Calu3 (cell line): ENCODE measurements at regions of chr4 and their contacts with region 1.

Region 1: DNA sequence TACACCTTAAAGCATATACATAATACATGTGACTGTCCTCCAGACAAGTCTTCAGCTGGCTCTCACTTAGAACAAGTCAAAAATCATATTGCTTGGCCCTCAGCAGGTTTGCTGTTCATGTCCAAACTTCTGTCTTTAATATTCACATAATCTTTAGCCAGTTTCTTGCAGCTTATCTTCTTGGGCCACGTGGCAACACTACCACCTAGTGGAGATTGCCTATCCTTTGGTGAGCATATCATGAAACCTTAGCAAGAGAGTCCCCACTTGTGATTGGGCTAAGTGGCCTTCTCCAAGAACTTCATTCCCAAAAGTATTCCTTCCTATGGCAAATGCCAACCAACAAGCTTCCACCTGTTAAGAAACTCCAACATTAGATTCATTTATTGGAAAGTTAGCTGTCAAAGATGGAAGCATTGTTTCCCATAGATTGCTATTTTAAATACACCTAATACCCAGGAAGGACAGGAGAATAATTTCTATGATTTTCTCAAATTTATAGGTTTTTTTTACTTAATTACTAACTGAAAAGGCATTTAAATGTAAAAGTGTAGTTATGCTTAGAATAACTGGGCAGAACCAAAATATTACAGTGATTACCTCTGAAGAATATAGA is 231.9 kb upstream of the INTU start:
- DNase-seq: peak; percentile 73
- H3K4me3 Mint-ChIP-seq: no peak overlapping the region
- H3K27ac Mint-ChIP-seq: no peak overlapping the region
- H3K4me1 Mint-ChIP-seq: peaks cover 2% of the 10 kb centered on the region
- H3K27me3 Mint-ChIP-seq: no peaks in the 10 kb centered on the region
- CTCF ChIP-seq: peak; percentile 64

Region 2: GRCh38 chr4:125772680-125773079 is 1628.2 kb before region 1 on chr4:
- CTCF ChIA-PET with region 1: no interaction called
- intact Hi-C with region 1: loop called (anchors 5 kb)
- DNase-seq: no peak
- H3K4me3 Mint-ChIP-seq: no peak overlapping the region
- H3K27ac Mint-ChIP-seq: no peak overlapping the region
- H3K4me1 Mint-ChIP-seq: no peaks in the 10 kb centered on the region
- H3K27me3 Mint-ChIP-seq: no peaks in the 10 kb centered on the region
- CTCF ChIP-seq: no peak

Region 3: DNA sequence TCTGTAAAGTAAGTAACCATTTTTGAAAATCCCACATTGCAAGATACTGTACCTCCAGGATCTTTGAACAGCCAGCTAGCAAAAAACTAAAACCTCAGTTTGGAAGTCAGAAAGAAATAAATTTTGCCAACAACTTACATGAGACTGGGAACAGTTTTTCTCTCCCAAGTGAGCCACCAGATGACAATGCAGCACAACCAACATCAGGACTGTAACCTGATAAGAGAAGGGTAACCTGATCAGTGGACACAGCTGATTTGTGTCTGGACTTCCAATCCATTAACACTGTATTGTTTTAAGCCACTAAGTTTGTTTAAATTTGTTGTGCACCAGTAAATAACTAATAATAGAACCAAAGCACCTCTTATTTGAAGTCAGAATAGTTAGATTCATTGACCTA is 1162.8 kb before region 1 on chr4:
- CTCF ChIA-PET with region 1: no interaction called
- intact Hi-C with region 1: loop called (anchors 10 kb)
- DNase-seq: no peak
- H3K4me3 Mint-ChIP-seq: no peak overlapping the region
- H3K27ac Mint-ChIP-seq: no peak overlapping the region
- H3K4me1 Mint-ChIP-seq: no peaks in the 10 kb centered on the region
- H3K27me3 Mint-ChIP-seq: no peaks in the 10 kb centered on the region
- CTCF ChIP-seq: no peak

Region 4: GRCh38 chr4:126627255-126627654 is 773.6 kb before region 1 on chr4:
- CTCF ChIA-PET with region 1: no interaction called
- intact Hi-C with region 1: loop called (anchors 10 kb)
- DNase-seq: no peak
- H3K4me3 Mint-ChIP-seq: no peak overlapping the region
- H3K27ac Mint-ChIP-seq: no peak overlapping the region
- H3K4me1 Mint-ChIP-seq: no peaks in the 10 kb centered on the region
- H3K27me3 Mint-ChIP-seq: no peaks in the 10 kb centered on the region
- CTCF ChIP-seq: no peak

Region 5: DNA sequence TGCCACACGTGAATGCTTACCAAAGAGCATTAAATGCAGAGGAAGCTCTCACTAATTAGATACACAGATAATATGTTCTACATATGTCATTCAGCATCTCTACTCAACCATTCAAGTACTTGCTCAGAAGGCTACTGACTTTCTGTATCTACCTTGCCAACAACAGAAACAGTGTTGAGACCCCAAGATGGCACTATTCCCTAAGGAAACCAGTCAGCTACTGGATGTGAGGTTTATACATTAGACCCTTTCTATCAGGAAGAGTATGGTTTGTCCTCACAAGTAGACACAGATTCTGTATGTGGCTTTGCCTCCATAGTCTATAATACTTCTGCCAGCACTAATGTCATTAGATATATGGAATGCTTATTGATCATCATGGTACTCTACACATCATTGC is 212.0 kb before region 1 on chr4:
- CTCF ChIA-PET with region 1: no interaction called
- intact Hi-C with region 1: loop called (anchors 1 kb)
- DNase-seq: no peak
- H3K4me3 Mint-ChIP-seq: no peak overlapping the region
- H3K27ac Mint-ChIP-seq: no peak overlapping the region
- H3K4me1 Mint-ChIP-seq: no peaks in the 10 kb centered on the region
- H3K27me3 Mint-ChIP-seq: no peaks in the 10 kb centered on the region
- CTCF ChIP-seq: no peak

Region 6: GRCh38 chr4:127335073-127335620 is 65.7 kb before region 1 on chr4:
- CTCF ChIA-PET with region 1: no interaction called
- intact Hi-C with region 1: no loop called
- DNase-seq: no peak
- H3K4me3 Mint-ChIP-seq: no peak overlapping the region
- H3K27ac Mint-ChIP-seq: no peak overlapping the region
- H3K4me1 Mint-ChIP-seq: no peaks in the 10 kb centered on the region
- H3K27me3 Mint-ChIP-seq: no peaks in the 10 kb centered on the region
- CTCF ChIP-seq: no peak

Region 7: DNA sequence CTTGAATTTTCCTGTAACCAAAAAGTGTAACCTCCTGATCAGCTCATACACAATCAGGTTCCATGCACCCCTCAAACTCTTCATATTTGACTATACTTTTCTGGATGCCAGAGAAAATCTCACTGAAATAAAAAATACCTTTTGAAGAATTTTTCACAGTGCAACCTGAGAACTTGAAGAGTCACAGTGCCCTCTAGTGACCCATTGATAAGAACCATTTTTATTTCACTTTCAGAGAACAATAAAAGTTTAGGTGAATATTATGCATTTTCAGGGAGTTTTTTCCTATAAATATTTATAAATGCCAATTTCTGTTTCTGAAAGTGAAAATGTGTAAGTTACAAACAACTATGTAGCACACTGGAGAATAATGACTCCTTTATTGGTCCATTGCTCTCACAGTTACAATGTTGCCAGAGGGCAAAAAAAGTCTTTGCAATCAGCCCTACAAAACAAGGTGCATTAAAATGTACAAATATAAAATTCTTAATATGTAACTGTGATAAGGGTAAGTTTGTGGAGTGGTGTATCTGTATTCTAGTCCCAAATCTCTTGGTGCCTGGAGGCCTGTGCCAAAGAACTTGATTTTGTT is 78.3 kb after region 1 on chr4:
- CTCF ChIA-PET with region 1: no interaction called
- intact Hi-C with region 1: loop called (anchors 5 kb)
- DNase-seq: no peak
- H3K4me3 Mint-ChIP-seq: no peak overlapping the region
- H3K27ac Mint-ChIP-seq: no peak overlapping the region
- H3K4me1 Mint-ChIP-seq: no peaks in the 10 kb centered on the region
- H3K27me3 Mint-ChIP-seq: no peaks in the 10 kb centered on the region
- CTCF ChIP-seq: no peak

Region 8: DNA sequence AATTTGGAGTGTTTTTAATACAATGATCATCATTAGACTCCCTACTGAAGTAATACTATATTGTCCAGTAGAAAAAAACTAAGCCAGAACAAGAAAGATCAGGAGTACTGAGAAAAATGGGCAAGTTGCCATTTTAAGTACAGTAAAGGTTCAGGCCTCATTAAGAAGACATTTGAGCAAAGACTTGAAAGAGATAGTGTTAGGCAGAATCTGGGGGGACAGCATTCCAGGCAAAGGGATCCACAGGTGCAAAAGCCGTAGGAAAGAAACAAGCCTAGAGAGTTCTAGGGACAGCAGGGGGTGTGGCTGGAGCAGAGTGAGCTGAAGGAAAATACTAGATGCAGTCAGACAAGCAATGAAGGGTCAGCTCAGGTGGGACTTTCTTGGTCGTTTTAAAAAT is 173.8 kb after region 1 on chr4:
- CTCF ChIA-PET with region 1: no interaction called
- intact Hi-C with region 1: no loop called
- DNase-seq: no peak
- H3K4me3 Mint-ChIP-seq: no peak overlapping the region
- H3K27ac Mint-ChIP-seq: no peak overlapping the region
- H3K4me1 Mint-ChIP-seq: no peaks in the 10 kb centered on the region
- H3K27me3 Mint-ChIP-seq: no peaks in the 10 kb centered on the region
- CTCF ChIP-seq: no peak

Region 9: DNA sequence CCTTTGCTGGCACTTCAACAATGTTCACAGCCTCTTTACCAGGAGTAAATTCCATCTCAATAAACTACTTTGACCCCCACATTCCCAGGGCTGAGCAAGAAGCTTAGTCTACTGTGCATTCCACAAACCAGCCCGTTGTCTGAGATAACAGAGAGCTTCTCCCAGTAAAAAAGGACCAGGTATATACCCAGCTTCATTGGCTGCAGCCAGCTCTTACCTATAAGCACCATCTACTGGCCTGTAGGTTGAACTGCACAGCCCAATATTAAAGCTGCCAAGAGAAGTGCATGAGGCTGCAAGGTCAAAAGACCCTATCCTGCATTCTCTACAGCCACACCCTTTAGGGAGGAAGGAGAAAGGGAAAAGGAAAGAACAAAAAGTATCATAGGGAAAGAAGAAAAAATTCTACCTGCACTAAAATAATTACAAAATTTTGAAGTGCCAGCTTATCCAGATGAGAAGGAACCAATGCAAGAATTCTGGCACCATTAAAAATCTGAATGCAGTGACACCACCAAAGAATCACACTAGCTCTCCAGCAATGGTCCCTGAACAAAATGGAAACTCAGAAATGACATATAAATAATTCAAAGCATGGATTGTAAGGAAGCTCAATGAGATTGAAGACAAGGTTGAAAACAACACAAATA is 186.2 kb after region 1 on chr4:
- CTCF ChIA-PET with region 1: no interaction called
- intact Hi-C with region 1: loop called (anchors 10 kb)
- DNase-seq: peak; percentile 14
- H3K4me3 Mint-ChIP-seq: no peak overlapping the region
- H3K27ac Mint-ChIP-seq: no peak overlapping the region
- H3K4me1 Mint-ChIP-seq: no peaks in the 10 kb centered on the region
- H3K27me3 Mint-ChIP-seq: no peaks in the 10 kb centered on the region
- CTCF ChIP-seq: peak; percentile 50